ENCODE measurements at regions of chr18 and their contacts with region 1.

Region 1: DNA sequence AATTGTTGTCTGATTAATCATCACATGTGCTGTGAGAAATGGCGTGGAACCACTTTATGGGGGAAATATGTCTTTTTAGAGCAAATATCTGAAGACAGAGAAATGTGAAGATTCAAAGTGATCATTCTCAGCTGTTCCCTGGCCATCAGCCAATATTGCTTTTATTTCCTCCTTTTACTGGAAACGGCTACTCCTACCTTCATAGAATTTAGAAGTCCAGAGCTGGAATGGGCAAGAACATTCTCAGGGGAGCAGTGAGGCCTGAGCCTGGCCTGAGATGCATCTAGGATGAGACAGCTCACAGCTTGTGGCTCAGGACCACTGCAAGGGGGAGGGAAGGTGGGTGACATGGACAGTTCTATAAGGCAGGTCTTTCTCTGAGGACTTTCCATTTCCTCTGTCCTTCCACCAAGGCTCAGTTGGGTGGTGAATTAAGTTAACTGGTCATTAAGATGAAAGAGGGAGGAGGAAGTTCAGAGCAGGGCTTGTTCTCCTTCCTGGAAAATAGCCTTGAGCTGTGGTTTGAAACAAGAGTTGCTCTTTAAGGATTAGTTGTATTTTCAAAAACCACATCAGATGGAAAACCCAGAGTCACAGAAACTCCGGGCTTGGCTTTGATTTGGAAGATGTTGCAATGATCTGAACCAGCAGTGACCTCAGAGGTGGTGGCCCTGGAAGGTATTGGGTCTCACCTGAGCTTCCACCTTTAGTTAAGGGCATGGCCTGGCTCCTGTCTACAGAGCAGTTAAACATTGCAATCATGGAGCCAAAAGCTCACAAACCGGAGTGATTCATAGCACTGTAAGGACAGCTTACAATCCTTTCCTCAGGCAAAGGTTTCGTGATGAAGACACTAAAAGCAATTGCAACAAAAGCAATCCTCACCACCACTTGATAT is 144.3 kb downstream of the VAPA start:
- DNase-seq: no peak

Region 2: DNA sequence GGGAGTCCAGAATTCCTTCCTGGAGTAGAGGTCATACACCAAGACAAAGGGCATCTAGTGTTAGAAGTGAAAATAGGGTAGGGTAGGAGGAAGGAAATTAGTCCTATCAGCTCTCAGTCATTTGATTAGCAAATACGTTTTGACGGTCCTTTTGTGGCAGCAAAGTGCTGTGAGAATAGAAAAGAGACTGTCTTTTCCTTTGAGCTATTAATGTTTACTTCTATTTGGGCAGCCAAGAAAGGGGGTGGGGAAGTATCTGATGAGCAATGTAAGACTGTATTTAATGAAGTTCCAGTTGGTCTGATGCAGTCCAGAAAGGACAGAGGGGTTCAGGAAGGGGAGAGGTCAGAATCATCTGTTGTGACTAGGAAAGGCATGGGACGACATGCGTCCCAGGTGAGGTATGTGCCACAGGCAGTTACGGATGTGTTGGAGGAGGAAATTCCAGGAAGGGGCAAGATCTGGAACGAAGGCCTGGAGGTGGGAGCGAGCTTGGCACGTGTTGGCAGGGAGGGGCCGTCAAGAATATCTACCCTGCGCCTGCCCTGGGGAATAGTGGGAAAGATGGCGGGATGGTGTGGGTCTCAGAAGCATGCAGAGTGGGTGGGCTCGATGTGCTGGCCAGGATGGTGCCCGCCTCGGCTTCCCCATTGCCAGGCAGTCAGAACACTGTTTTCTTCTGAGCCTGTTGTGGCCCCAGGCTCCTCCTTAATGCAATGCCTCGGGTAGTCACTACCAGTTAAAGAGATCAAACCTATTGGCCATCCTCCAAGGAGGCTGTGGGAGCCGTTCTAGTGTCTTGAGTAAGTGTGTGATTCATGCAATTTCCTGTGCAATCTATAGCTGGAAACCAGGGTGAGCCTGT is 230.3 kb before region 1 on chr18:
- intact Hi-C with region 1: no loop called
- DNase-seq: no peak

Region 3: DNA sequence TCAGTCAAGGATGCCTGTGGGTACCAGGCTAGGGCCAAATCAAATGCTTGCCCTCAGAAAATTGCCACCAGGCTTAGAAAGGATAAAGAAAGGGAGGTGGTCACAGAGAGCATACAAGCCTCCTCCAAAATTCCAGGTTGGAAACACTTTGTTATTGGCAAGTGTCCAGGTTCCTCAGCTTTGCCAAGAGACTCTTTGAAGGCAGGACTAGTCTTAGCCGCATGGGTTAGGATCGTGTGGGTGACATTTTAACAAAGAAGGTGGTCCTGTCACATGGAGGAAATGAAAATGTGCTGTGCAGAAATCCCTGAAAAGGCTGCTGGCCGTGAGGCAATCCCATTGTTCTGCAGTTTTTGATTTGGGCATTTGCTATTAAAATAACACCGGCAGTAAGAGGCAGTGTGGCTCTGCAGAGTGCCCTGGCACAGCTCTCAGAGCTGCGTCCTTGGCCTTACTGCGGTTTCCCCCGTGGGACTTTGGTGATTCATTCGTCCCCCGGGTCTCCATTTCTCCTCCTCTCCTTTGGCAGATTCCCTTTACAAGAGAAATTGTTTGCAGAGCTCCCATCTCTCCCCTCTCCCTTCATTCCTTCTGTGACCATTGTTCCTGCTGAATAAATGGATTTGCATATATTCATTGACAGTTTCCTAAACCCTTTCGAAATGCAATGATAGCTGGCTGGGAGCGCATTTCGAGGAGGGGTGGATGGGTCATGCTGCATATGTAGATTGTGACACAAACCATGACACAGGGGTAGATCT is 43.0 kb after region 1 on chr18:
- intact Hi-C with region 1: no loop called
- DNase-seq: no peak

Region 4: DNA sequence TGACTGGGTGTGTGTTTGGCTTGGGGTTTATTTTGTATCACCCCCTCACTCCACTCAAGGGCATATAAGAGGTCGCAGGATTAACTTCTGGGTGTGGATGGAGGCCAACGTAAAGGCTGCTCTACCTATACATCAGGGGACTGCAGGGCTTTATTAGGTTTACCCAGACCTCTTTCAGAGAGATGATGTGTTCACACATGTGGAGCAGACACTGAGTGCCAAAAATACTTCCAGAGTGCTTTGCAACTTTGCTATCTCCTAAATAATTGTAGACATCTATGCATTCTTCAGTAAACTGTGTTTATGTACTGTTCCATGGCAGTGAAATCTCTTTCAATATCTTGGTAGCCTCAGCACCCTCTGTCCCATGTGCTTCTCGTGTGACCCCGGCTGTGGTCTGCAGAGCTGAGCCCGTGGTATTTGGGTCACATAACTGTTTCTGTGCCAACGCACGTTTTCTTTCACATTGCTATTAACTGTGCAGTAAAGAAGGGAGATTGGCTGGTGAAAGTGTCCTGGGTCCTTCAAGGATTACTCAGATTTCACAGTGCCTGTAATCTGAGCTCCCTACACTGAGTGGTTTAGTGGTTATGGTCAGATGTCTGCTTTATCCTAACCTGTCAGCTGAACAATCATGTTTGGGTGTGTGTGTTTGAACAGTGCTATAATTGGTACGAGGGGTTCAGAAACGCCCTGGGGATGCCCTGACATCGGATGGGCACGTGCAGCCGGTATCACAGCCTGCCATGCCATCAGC is 63.8 kb after region 1 on chr18:
- intact Hi-C with region 1: loop called (anchors 5 kb)
- DNase-seq: no peak

Region 5: GRCh38 chr18:10270151-10270571 is 212.0 kb after region 1 on chr18:
- intact Hi-C with region 1: loop called (anchors 5 kb)
- DNase-seq: no peak

Measured in cardiac septum (tissue), 1 donor.